CD4-positive, alpha-beta T cell (primary cell): ENCODE measurements at regions of chr12 and their contacts with region 1.

Region 1: GRCh38 chr12:9741726-9742125 is 8.8 kb upstream of the CLECL1 start:
- DNase-seq: peak; percentile 38 to 94 (median 64)
- ATAC-seq: peak; percentile 65
- H3K4me3 ChIP-seq: no peak overlapping the region
- H3K4me3 Mint-ChIP-seq: peak overlapping the region; percentile 78
- H3K27ac ChIP-seq: peak overlapping the region; percentile 46 to 75
- H3K27ac Mint-ChIP-seq: peak overlapping the region; percentile 91
- H3K4me1 ChIP-seq: peaks cover 37% of the 10 kb centered on the region
- H3K4me1 Mint-ChIP-seq: peaks cover 70% of the 10 kb centered on the region
- H3K27me3 ChIP-seq: no peaks in the 10 kb centered on the region
- H3K27me3 Mint-ChIP-seq: no peaks in the 10 kb centered on the region
- CTCF ChIP-seq: no peak

Region 2: DNA sequence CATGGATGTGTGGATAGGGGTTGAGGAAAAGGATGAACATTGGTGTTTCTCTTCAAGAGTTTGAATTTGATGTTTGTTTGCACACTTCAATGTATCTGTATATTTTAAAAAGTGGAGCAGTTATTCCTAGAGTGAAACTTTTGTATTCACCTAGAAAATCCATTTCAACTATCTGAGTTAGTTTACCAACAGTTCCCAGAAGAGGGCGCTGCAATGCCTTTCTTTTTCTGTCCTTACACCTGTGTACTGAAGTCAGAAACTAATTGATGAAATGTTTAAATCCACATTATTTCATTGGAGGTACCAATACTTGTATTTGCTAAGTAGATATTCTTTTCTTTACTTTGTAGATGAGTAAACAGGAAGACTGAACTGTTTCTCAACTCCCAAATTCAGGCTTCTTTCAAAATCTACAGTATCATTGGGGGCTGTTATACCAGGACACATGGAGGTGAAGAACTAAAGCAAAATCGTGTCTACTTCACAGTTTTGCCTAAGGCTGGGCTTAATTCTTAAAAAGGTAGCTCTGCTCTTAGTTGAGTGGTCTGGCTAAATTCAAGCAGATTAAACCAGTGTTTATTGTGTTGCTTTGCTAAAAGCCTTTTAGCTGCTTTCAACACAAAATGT is 107.4 kb before region 1 on chr12:
- CTCF ChIA-PET with region 1: interaction called, 5 read pairs
- POLR2A ChIA-PET with region 1: interaction called, 9 read pairs
- intact Hi-C with region 1: loop called (anchors 1 to 5 kb)
- DNase-seq: peak; percentile 55 to 91 (median 78)
- ATAC-seq: peak; percentile 89
- H3K4me3 ChIP-seq: no peak overlapping the region
- H3K4me3 Mint-ChIP-seq: peak overlapping the region; percentile 79
- H3K27ac ChIP-seq: peak overlapping the region in 1 of 2 donors; percentile 37
- H3K27ac Mint-ChIP-seq: peak overlapping the region; percentile 77
- H3K4me1 ChIP-seq: peaks cover 45% of the 10 kb centered on the region
- H3K4me1 Mint-ChIP-seq: peaks cover 59% of the 10 kb centered on the region
- H3K27me3 ChIP-seq: no peaks in the 10 kb centered on the region
- H3K27me3 Mint-ChIP-seq: no peaks in the 10 kb centered on the region
- CTCF ChIP-seq: peak; percentile 87

Region 3: GRCh38 chr12:9707864-9708808 is 33.6 kb before region 1 on chr12:
- CTCF ChIA-PET with region 1: interaction called, 15 read pairs
- POLR2A ChIA-PET with region 1: interaction called, 52 read pairs
- intact Hi-C with region 1: loop called in 1 of 2 experiments (anchors 2 kb)
- DNase-seq: peak; percentile 45 to 87 (median 60)
- ATAC-seq: peak; percentile 85
- H3K4me3 ChIP-seq: peak overlapping the region; percentile 30
- H3K4me3 Mint-ChIP-seq: peak overlapping the region; percentile 79
- H3K27ac ChIP-seq: peak overlapping the region; percentile 68 to 71
- H3K27ac Mint-ChIP-seq: peak overlapping the region; percentile 89
- H3K4me1 ChIP-seq: peaks cover 23% of the 10 kb centered on the region
- H3K4me1 Mint-ChIP-seq: peaks cover 79% of the 10 kb centered on the region
- H3K27me3 ChIP-seq: no peaks in the 10 kb centered on the region
- H3K27me3 Mint-ChIP-seq: no peaks in the 10 kb centered on the region
- CTCF ChIP-seq: peak; percentile 74

Region 4: GRCh38 chr12:9813821-9814809 is 72.4 kb after region 1 on chr12:
- CTCF ChIA-PET with region 1: interaction called, 12 read pairs
- POLR2A ChIA-PET with region 1: interaction called, 13 read pairs
- intact Hi-C with region 1: no loop called
- DNase-seq: peak; percentile 88 to 95 (median 92)
- ATAC-seq: peak; percentile 97
- H3K4me3 ChIP-seq: peak overlapping the region; percentile 59
- H3K4me3 Mint-ChIP-seq: peak overlapping the region; percentile 89
- H3K27ac ChIP-seq: peak overlapping the region in 1 of 2 donors; percentile 31
- H3K27ac Mint-ChIP-seq: peak overlapping the region; percentile 92
- H3K4me1 ChIP-seq: peaks cover 12% of the 10 kb centered on the region
- H3K4me1 Mint-ChIP-seq: peaks cover 10% of the 10 kb centered on the region
- H3K27me3 ChIP-seq: peaks cover 0 to 2% of the 10 kb centered on the region in 2 experiments
- H3K27me3 Mint-ChIP-seq: no peaks in the 10 kb centered on the region
- CTCF ChIP-seq: peak; percentile 92

Region 5: GRCh38 chr12:10140001-10140400 is 398.3 kb after region 1 on chr12:
- CTCF ChIA-PET with region 1: no interaction called
- POLR2A ChIA-PET with region 1: no interaction called
- intact Hi-C with region 1: loop called in 1 of 2 experiments (anchors 5 kb)
- DNase-seq: peak in 13 of 14 experiments; percentile 10 to 74 (median 22)
- ATAC-seq: peak; percentile 60
- H3K4me3 ChIP-seq: no peak overlapping the region
- H3K4me3 Mint-ChIP-seq: no peak overlapping the region
- H3K27ac ChIP-seq: no peak overlapping the region
- H3K27ac Mint-ChIP-seq: no peak overlapping the region
- H3K4me1 ChIP-seq: no peaks in the 10 kb centered on the region
- H3K4me1 Mint-ChIP-seq: no peaks in the 10 kb centered on the region
- H3K27me3 ChIP-seq: peaks cover 0 to 4% of the 10 kb centered on the region in 2 experiments
- H3K27me3 Mint-ChIP-seq: peaks cover 4% of the 10 kb centered on the region
- CTCF ChIP-seq: peak; percentile 18